ENCODE measurements at regions of chr12 and their contacts with region 1.

Region 1: GRCh38 chr12:120228291-120229070 is 27.6 kb upstream of the RPLP0 start:
- DNase-seq: peak; percentile 84 to 87 (median 86)
- H3K4me3 ChIP-seq: peak overlapping the region in 1 of 2 donors; percentile 3
- H3K4me3 Mint-ChIP-seq: peak overlapping the region; percentile 65 to 84 (median 70)
- H3K27ac ChIP-seq: peak overlapping the region; percentile 43
- H3K27ac Mint-ChIP-seq: peak overlapping the region; percentile 29 to 94 (median 86)
- H3K4me1 ChIP-seq: peaks cover 85% of the 10 kb centered on the region
- H3K4me1 Mint-ChIP-seq: peaks cover 59 to 86% (median 75%) of the 10 kb centered on the region in 4 donors
- H3K27me3 ChIP-seq: no peaks in the 10 kb centered on the region
- H3K27me3 Mint-ChIP-seq: no peaks in the 10 kb centered on the region

Region 2: GRCh38 chr12:120200364-120200800 is 28.1 kb before region 1 on chr12:
- CTCF ChIA-PET with region 1: interaction called, 82 read pairs
- POLR2A ChIA-PET with region 1: interaction called, 114 read pairs
- intact Hi-C with region 1: loop called (anchors 2 kb)
- DNase-seq: peak in 1 of 5 donors; percentile 19
- H3K4me3 ChIP-seq: peak overlapping the region; percentile 80 to 91
- H3K4me3 Mint-ChIP-seq: peak overlapping the region; percentile 93 to 99 (median 98)
- H3K27ac ChIP-seq: peak overlapping the region; percentile 84
- H3K27ac Mint-ChIP-seq: peak overlapping the region; percentile 93 to 99 (median 98)
- H3K4me1 ChIP-seq: peaks cover 42% of the 10 kb centered on the region
- H3K4me1 Mint-ChIP-seq: peaks cover 23 to 60% (median 36%) of the 10 kb centered on the region in 4 donors
- H3K27me3 ChIP-seq: no peaks in the 10 kb centered on the region
- H3K27me3 Mint-ChIP-seq: no peaks in the 10 kb centered on the region

Region 3: DNA sequence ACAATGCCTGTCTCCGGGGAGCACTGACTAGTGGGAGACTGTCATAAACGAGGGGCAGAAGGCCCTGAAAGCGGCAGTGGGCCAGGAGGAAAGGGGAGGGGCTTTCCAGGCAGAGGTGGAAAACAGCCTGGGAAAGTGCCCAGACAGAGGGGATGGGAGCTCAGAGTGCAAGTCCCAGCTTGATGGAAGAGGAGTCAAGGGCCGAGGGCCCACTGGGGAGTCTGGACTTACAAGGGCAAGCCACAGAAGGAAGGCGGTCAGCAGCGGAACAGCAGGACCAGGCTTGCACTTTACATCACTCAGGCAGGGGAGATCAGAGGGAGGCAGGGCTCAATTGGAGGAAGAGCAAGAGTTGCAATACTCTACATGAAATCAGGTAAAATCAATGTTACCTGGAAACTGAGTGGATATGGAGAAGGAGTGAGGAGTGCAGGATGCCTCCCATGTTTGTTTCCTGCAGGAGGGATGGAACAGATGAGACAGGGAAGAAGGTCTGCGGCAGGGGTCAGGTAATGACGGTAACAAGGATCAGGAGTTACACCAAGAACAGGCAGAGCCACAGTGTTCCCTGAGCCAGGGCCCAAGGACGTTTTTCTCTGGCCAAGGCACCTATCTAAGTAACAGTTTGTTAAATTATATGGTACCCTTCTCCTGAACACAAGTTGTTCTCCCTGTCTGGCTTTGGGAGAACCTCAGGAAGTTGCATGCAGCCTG is 13.2 kb after region 1 on chr12:
- CTCF ChIA-PET with region 1: interaction called, 1,075 read pairs
- POLR2A ChIA-PET with region 1: interaction called, 247 read pairs
- intact Hi-C with region 1: no loop called
- DNase-seq: no peak
- H3K4me3 ChIP-seq: no peak overlapping the region
- H3K4me3 Mint-ChIP-seq: peak overlapping the region in 6 of 8 donors; percentile 18 to 67 (median 33)
- H3K27ac ChIP-seq: no peak overlapping the region
- H3K27ac Mint-ChIP-seq: peak overlapping the region; percentile 60 to 92 (median 74)
- H3K4me1 ChIP-seq: peaks cover 82% of the 10 kb centered on the region
- H3K4me1 Mint-ChIP-seq: peaks cover 44 to 86% (median 67%) of the 10 kb centered on the region in 4 donors
- H3K27me3 ChIP-seq: no peaks in the 10 kb centered on the region
- H3K27me3 Mint-ChIP-seq: no peaks in the 10 kb centered on the region

Region 4: GRCh38 chr12:120265473-120266179 is 37.1 kb after region 1 on chr12 and contains the start of gene PXN:
- CTCF ChIA-PET with region 1: interaction called, 1,075 read pairs
- POLR2A ChIA-PET with region 1: interaction called, 338 read pairs
- intact Hi-C with region 1: loop called (anchors 1 kb)
- DNase-seq: peak; percentile 84 to 93 (median 89)
- H3K4me3 ChIP-seq: peak within 1 kb of the TSS; percentile 59 to 85
- H3K4me3 Mint-ChIP-seq: peak within 1 kb of the TSS; percentile 89 to 100 (median 94)
- H3K27ac ChIP-seq: peak within 1 kb of the TSS; percentile 81
- H3K27ac Mint-ChIP-seq: peak within 1 kb of the TSS; percentile 92 to 98 (median 96)
- H3K4me1 ChIP-seq: peaks cover 44% of the 10 kb centered on the region
- H3K4me1 Mint-ChIP-seq: peaks cover 24 to 51% (median 37%) of the 10 kb centered on the region in 4 donors
- H3K27me3 ChIP-seq: no peaks in the 10 kb centered on the region
- H3K27me3 Mint-ChIP-seq: no peaks in the 10 kb centered on the region
- total RNA-seq, gene PXN: 108 to 126 TPM

Measured in CD4-positive, alpha-beta memory T cell (primary cell).